Heart right ventricle (tissue), 16 donors: ENCODE measurements at regions of chr19 and their contacts with region 1.

Region 1: DNA sequence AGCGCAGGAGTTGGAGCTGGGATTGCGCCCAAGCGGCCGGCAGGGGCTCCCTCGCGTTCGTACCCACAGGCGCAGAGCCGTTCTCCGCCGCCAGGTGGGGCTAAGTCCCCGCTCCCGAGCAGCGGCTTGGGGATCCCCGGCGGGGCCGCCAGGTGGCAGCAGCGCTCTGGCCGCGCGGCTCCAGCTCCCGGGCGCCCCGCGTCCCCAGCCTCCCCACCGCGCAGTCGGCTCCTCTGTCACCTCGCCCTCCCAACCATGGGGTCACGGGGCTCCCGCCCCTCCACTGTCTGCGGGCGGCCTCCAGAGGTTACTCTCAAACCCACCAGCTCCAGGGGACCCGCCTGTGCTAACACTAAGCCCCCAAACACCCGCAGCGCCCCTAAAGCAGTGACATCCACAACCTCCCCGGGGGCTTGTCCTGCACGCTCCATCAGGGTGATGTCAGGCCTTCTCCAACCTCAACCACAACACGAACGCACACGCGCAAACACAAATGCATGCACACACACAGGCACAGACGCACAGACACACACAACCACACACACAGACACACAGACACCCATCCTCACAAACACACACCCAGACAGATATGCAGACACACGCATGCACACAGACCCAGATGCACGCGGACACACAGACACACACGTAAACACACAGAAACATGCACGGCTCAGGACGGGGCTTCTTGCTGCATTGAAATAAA is 18.4 kb upstream of the KCTD15 start:
- DNase-seq: peak; percentile 73 to 90
- ATAC-seq: peak; percentile 83 to 92 (median 90)
- H3K4me3 ChIP-seq: peak overlapping the region in 4 of 10 donors; percentile 16 to 39 (median 32)
- H3K27ac ChIP-seq: no peak overlapping the region
- H3K4me1 ChIP-seq: peaks cover 0 to 15% (median 7%) of the 10 kb centered on the region in 9 donors
- H3K27me3 ChIP-seq: peaks cover 0 to 60% (median 43%) of the 10 kb centered on the region in 7 donors
- CTCF ChIP-seq: peak in 8 of 9 donors; percentile 100

Region 2: GRCh38 chr19:33235269-33235995 is 542.8 kb before region 1 on chr19:
- intact Hi-C with region 1: loop called in 6 of 10 experiments (anchors 5 to 10 kb)
- DNase-seq: peak; percentile 71 to 82
- ATAC-seq: peak; percentile 56 to 79 (median 71)
- H3K4me3 ChIP-seq: no peak overlapping the region
- H3K27ac ChIP-seq: no peak overlapping the region
- H3K4me1 ChIP-seq: peaks cover 0 to 13% (median 0%) of the 10 kb centered on the region in 9 donors
- H3K27me3 ChIP-seq: peaks cover 4 to 48% (median 24%) of the 10 kb centered on the region in 7 donors
- CTCF ChIP-seq: peak; percentile 74 to 95 (median 91)

Region 3: GRCh38 chr19:33241530-33242101 is 536.6 kb before region 1 on chr19:
- intact Hi-C with region 1: loop called in 6 of 10 experiments (anchors 5 to 10 kb)
- DNase-seq: peak in 1 of 2 donors; percentile 29
- ATAC-seq: peak; percentile 41 to 75 (median 59)
- H3K4me3 ChIP-seq: no peak overlapping the region
- H3K27ac ChIP-seq: no peak overlapping the region
- H3K4me1 ChIP-seq: peaks cover 0 to 8% (median 5%) of the 10 kb centered on the region in 9 donors
- H3K27me3 ChIP-seq: peaks cover 0 to 23% (median 10%) of the 10 kb centered on the region in 7 donors
- CTCF ChIP-seq: peak; percentile 56 to 85 (median 78)

Region 4: DNA sequence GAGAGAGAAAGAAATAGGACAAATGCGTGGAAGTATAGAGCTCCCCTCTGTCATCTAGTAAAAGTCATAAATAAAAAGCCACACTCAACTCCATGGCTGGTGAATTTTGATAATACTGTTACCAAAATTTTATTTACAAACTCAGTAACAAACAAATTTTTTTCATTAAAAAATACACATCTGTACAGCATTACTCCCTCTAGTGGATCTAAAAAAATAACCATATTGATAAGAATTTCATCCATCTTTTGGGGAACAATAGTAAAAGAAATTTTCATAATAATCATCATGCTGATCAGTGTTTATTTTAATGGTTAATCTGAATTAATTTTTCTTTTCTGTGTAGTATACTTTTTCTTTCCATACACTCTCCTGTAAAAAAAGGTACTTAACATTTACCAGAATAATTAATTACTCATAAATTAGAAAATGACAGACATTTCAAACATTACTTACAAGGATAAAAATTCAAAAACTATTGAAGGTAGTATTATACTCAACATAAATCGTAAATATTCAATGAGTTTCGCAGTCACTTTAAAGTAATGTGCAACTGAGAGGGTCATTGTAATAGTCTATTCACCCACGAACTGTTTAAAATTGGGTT is 220.6 kb after region 1 on chr19:
- intact Hi-C with region 1: loop called in 9 of 10 experiments (anchors 1 to 5 kb)
- DNase-seq: no peak
- ATAC-seq: no peak
- H3K4me3 ChIP-seq: no peak overlapping the region
- H3K27ac ChIP-seq: no peak overlapping the region
- H3K4me1 ChIP-seq: peaks cover 0 to 4% (median 0%) of the 10 kb centered on the region in 9 donors
- H3K27me3 ChIP-seq: peaks cover 0 to 19% (median 4%) of the 10 kb centered on the region in 7 donors
- CTCF ChIP-seq: peak; percentile 21 to 70 (median 55)

Region 5: DNA sequence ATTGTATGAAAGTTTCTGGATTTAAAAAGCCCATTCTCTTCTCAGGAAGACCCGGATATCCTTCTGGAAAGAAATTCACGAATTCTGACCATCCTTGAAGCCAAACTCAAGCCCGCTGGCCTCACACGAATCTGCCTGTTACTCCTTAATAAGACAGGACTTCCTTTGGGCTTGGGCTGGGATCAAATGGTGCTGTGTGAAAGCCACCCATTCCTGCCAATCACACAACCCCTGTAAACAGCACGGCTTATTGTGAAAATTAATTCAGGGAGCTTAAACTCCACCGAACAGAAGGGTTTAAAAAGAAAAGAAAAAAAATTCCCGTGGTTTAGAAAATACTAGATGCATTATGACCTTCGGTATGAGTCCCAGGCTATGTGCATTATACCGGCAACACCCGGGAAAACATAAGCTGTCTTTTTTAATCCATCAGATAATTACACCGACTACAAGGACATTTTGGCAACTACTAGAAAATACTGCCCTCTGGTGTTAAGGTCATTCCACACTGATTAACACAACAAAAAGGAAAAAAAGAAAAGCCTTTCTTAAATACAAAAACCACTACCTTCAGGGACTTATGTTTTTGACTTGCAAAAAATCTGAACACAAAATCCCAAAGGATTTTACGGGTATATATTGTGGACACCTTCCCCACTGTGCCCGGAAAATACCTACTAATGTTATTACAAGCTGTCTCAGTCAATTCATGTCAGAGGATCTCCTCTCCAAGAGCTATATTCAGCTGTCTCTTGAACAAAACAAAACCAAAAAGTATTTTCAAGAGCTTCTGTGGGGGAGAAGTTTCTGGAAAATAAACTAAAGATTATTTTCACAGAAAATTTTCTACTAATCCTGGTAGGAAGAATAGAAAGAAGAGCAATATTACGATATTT is 318.0 kb after region 1 on chr19:
- intact Hi-C with region 1: loop called (anchors 1 to 5 kb)
- DNase-seq: peak in 1 of 2 donors; percentile 16
- ATAC-seq: peak in 2 of 8 donors; percentile 33 to 59
- H3K4me3 ChIP-seq: no peak overlapping the region
- H3K27ac ChIP-seq: no peak overlapping the region
- H3K4me1 ChIP-seq: peaks cover 0 to 8% (median 0%) of the 10 kb centered on the region in 9 donors
- H3K27me3 ChIP-seq: peaks cover 0 to 50% (median 6%) of the 10 kb centered on the region in 7 donors
- CTCF ChIP-seq: peak; percentile 25 to 76 (median 67)

Region 6: GRCh38 chr19:34145741-34146202 is 367.5 kb after region 1 on chr19:
- intact Hi-C with region 1: loop called (anchors 1 to 10 kb)
- DNase-seq: peak in 1 of 2 donors; percentile 46
- ATAC-seq: peak in 4 of 8 donors; percentile 27 to 56 (median 41)
- H3K4me3 ChIP-seq: no peak overlapping the region
- H3K27ac ChIP-seq: no peak overlapping the region
- H3K4me1 ChIP-seq: no peaks in the 10 kb centered on the region
- H3K27me3 ChIP-seq: peaks cover 0 to 3% (median 0%) of the 10 kb centered on the region in 7 donors
- CTCF ChIP-seq: peak; percentile 68 to 88 (median 80)